Naive thymus-derived CD4-positive, alpha-beta T cell (primary cell): ENCODE measurements at regions of chr4 and their contacts with region 1.

Region 1: DNA sequence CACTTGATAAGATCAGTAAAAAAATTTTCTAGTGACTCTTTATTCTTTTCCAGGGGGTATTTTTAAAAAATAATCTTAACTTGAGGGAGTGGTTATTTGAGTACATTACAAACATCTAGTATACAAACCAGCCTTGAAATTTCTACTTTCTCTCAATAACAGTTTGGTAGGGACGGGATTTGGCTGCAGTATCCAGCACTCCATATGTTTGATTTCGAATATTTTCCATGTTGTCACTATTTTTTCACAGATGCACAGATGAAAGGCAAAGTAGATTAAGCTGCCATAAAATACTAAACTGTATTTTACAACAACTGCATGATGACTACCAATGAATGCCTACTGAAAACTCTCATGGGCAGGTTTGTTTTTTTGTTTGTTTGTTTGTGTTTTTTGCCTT is 225.0 kb downstream of the COX7B2 start:
- DNase-seq: no peak
- ATAC-seq: no peak
- H3K4me3 ChIP-seq: no peak overlapping the region
- H3K4me3 Mint-ChIP-seq: no peak overlapping the region
- H3K27ac ChIP-seq: no peak overlapping the region
- H3K27ac Mint-ChIP-seq: no peak overlapping the region
- H3K4me1 ChIP-seq: no peaks in the 10 kb centered on the region
- H3K4me1 Mint-ChIP-seq: no peaks in the 10 kb centered on the region
- H3K27me3 ChIP-seq: no peaks in the 10 kb centered on the region
- H3K27me3 Mint-ChIP-seq: no peaks in the 10 kb centered on the region

Region 2: GRCh38 chr4:47215759-47216158 is 531.7 kb after region 1 on chr4:
- CTCF ChIA-PET with region 1: no interaction called
- POLR2A ChIA-PET with region 1: no interaction called
- intact Hi-C with region 1: loop called in 1 of 2 experiments (anchors 5 kb)
- DNase-seq: no peak
- ATAC-seq: no peak
- H3K4me3 ChIP-seq: no peak overlapping the region
- H3K4me3 Mint-ChIP-seq: no peak overlapping the region
- H3K27ac ChIP-seq: no peak overlapping the region
- H3K27ac Mint-ChIP-seq: no peak overlapping the region
- H3K4me1 ChIP-seq: no peaks in the 10 kb centered on the region
- H3K4me1 Mint-ChIP-seq: no peaks in the 10 kb centered on the region
- H3K27me3 ChIP-seq: no peaks in the 10 kb centered on the region
- H3K27me3 Mint-ChIP-seq: peaks cover 0 to 15% (median 13%) of the 10 kb centered on the region in 5 donors